T-cell (primary cell): ENCODE measurements at regions of chr7 and their contacts with region 1.

Region 1: DNA sequence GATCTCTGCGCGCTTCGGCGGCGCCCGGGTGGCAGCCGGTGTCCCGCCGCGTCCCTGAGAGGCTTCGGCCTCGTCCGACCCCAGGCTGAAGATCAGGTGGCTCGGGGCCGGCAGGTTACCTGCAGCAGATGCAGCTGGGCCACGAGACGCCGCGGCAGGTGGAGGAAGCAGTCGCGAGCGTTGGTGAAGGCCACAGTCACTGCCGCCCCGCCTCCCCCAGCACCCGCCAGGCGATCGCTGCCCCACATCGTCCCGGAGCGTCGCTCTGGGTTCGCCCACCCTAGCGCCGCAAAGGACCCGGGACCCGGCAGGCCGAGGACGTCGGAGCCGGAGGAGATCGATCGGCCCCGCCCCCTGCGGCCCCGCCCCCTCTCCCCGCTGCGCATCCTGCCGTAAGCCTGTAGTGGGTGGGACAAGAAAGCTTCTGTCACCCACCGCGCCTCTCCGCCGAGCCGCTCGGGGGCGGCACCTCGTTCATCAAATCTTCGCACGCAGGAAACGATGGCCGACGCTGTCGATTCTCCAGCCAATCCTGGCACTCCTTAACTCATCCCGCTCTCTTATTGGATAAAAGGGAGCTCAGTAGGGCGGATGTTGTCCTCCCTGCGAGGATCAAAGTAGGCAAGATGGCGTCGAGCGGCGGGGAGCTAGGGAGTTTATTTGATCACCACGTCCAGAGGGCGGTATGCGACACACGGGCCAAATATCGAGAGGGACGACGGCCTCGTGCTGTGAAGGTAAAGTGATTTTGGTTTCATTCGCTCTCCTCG is at the starts of genes PEX1 and RBM48:
- DNase-seq: peak; percentile 85 to 99 (median 96)
- ATAC-seq: peak; percentile 90 to 95 (median 94)
- H3K4me3 ChIP-seq: peak within 1 kb of the TSS; percentile 87 to 96
- H3K4me3 Mint-ChIP-seq: peak within 1 kb of the TSS; percentile 83 to 85 (median 84)
- H3K27ac ChIP-seq: peak within 1 kb of the TSS; percentile 93
- H3K27ac Mint-ChIP-seq: peak within 1 kb of the TSS; percentile 89 to 96
- H3K4me1 ChIP-seq: peaks cover 9 to 19% of the 10 kb centered on the region in 2 experiments
- H3K4me1 Mint-ChIP-seq: peaks cover 43 to 61% (median 49%) of the 10 kb centered on the region in 3 donors
- H3K27me3 ChIP-seq: no peaks in the 10 kb centered on the region
- H3K27me3 Mint-ChIP-seq: no peaks in the 10 kb centered on the region
- total RNA-seq, gene PEX1: 24.0 to 33.8 (median 29.2) TPM
- total RNA-seq, gene RBM48: 23.9 to 37.1 (median 29.6) TPM

Region 2: GRCh38 chr7:92295391-92295790 is 233.0 kb before region 1 on chr7:
- CTCF ChIA-PET with region 1: no interaction called
- POLR2A ChIA-PET with region 1: interaction called in 1 of 2 experiments, 10 read pairs
- DNase-seq: no peak
- ATAC-seq: no peak
- H3K4me3 ChIP-seq: no peak overlapping the region
- H3K4me3 Mint-ChIP-seq: no peak overlapping the region
- H3K27ac ChIP-seq: no peak overlapping the region
- H3K27ac Mint-ChIP-seq: no peak overlapping the region
- H3K4me1 ChIP-seq: no peaks in the 10 kb centered on the region
- H3K4me1 Mint-ChIP-seq: peaks cover 21 to 30% (median 21%) of the 10 kb centered on the region in 3 donors
- H3K27me3 ChIP-seq: no peaks in the 10 kb centered on the region
- H3K27me3 Mint-ChIP-seq: no peaks in the 10 kb centered on the region

Region 3: DNA sequence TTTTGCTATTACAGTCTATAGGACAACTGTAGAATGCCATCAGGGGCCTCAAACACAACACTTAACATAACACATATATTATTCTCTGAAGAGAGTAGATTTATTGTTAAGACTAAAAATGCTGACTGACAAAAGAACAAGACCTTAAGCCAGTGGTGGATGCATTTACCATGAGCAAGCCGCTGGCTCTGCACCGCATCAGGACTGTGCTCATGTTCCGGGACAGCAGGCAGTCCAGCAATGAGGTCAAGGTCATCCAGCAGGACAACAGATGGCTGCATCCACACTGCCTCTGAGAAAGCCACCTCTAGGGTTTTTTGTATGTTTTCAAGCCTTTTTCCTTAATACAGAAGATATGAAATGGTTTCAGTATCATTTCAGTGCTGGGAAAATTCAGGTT is 23.8 kb before region 1 on chr7:
- CTCF ChIA-PET with region 1: no interaction called
- POLR2A ChIA-PET with region 1: no interaction called
- DNase-seq: no peak
- ATAC-seq: no peak
- H3K4me3 ChIP-seq: no peak overlapping the region
- H3K4me3 Mint-ChIP-seq: no peak overlapping the region
- H3K27ac ChIP-seq: no peak overlapping the region
- H3K27ac Mint-ChIP-seq: no peak overlapping the region
- H3K4me1 ChIP-seq: no peaks in the 10 kb centered on the region
- H3K4me1 Mint-ChIP-seq: peaks cover 0 to 6% (median 4%) of the 10 kb centered on the region in 3 donors
- H3K27me3 ChIP-seq: no peaks in the 10 kb centered on the region
- H3K27me3 Mint-ChIP-seq: no peaks in the 10 kb centered on the region

Region 4: GRCh38 chr7:92584996-92585395 is 56.6 kb after region 1 on chr7:
- CTCF ChIA-PET with region 1: interaction called in 1 of 2 experiments, 28 read pairs
- POLR2A ChIA-PET with region 1: interaction called, 9 to 11 read pairs
- DNase-seq: peak in 3 of 35 experiments; percentile 6 to 33 (median 11)
- ATAC-seq: peak in 1 of 4 experiments; percentile 21
- H3K4me3 ChIP-seq: no peak overlapping the region
- H3K4me3 Mint-ChIP-seq: peak overlapping the region in 1 of 3 donors; percentile 22
- H3K27ac ChIP-seq: peak overlapping the region; percentile 1
- H3K27ac Mint-ChIP-seq: peak overlapping the region; percentile 25 to 79
- H3K4me1 ChIP-seq: peaks cover 19 to 20% of the 10 kb centered on the region in 2 experiments
- H3K4me1 Mint-ChIP-seq: peaks cover 65 to 74% (median 66%) of the 10 kb centered on the region in 3 donors
- H3K27me3 ChIP-seq: no peaks in the 10 kb centered on the region
- H3K27me3 Mint-ChIP-seq: no peaks in the 10 kb centered on the region

Region 5: DNA sequence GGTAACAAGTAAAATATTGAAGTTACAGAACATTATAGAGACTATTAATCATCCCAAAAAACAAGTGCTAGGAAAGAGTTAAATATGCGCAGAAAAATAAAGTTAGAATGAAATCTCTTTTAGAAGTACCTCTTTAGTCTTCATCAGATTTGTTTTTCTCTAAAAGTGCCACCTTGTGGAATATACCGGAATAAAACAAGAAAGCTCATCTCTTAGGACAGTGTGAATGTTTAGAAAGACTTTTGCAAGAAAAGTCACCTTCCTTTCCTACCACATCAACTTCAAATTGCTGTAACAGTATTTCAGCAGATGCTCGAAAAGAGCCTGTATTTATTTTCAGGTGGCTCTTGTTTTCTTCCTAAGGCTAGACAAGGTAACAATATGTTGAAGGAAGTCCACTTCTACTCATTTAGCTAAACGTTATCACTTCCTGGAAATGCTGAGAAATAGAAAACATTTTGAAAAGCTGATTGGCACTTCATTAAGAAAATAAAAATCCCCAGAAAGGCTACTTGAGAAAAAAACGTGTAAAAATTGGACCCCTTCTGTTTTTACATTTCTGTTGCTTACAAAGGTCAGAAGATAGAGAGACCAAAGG is 81.6 kb after region 1 on chr7:
- CTCF ChIA-PET with region 1: interaction called in 1 of 2 experiments, 11 read pairs
- POLR2A ChIA-PET with region 1: interaction called in 1 of 2 experiments, 7 read pairs
- DNase-seq: peak in 1 of 35 experiments; percentile 43
- ATAC-seq: peak in 3 of 4 experiments; percentile 60 to 71 (median 65)
- H3K4me3 ChIP-seq: no peak overlapping the region
- H3K4me3 Mint-ChIP-seq: no peak overlapping the region
- H3K27ac ChIP-seq: no peak overlapping the region
- H3K27ac Mint-ChIP-seq: peak overlapping the region; percentile 37 to 57
- H3K4me1 ChIP-seq: peaks cover 0 to 2% of the 10 kb centered on the region in 2 experiments
- H3K4me1 Mint-ChIP-seq: peaks cover 6 to 9% (median 9%) of the 10 kb centered on the region in 3 donors
- H3K27me3 ChIP-seq: no peaks in the 10 kb centered on the region
- H3K27me3 Mint-ChIP-seq: no peaks in the 10 kb centered on the region

Region 6: DNA sequence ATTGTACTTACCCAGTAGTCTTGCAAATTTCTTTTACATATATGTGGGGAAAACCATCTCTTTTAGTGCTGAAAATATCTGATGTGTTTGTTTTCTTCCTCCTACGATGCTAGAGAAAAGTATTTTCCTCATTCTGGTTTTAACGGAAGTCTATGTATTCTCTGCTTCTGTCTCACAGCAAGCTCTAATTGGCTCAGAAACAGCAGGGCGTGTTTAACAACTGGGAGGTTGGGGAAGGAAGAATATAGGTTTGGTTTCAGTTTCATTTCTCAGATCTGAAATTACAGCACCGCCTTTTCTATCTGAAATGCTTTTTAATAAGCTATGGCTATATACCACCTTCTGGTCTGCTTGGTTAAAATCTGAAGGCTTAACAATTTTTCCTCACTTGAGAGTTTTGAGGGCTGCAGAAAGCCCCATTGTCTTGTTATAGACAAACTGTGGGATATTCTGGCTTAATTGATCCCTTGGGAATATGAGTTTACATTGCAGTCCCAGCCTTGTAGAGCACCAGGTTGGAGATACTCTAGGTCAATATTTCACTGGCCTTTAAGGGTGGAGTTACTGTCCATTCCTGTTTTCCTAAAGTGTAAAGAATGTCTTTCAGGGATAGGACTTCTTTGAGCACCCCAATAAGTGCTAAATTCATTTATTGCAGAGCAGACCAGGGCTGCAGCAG is 589.6 kb after region 1 on chr7 and contains the start of gene SAMD9:
- CTCF ChIA-PET with region 1: interaction called, 3 to 8 read pairs
- POLR2A ChIA-PET with region 1: interaction called in 1 of 2 experiments, 12 read pairs
- DNase-seq: peak in 33 of 35 experiments; percentile 22 to 86 (median 64)
- ATAC-seq: peak; percentile 99 to 100 (median 99)
- H3K4me3 ChIP-seq: peak within 1 kb of the TSS; percentile 49 to 55
- H3K4me3 Mint-ChIP-seq: peak within 1 kb of the TSS; percentile 74 to 92 (median 86)
- H3K27ac ChIP-seq: peak within 1 kb of the TSS; percentile 70
- H3K27ac Mint-ChIP-seq: peak within 1 kb of the TSS; percentile 88 to 97
- H3K4me1 ChIP-seq: peaks cover 13 to 22% of the 10 kb centered on the region in 2 experiments
- H3K4me1 Mint-ChIP-seq: peaks cover 46 to 54% (median 49%) of the 10 kb centered on the region in 3 donors
- H3K27me3 ChIP-seq: no peaks in the 10 kb centered on the region
- H3K27me3 Mint-ChIP-seq: no peaks in the 10 kb centered on the region
- total RNA-seq, gene SAMD9: 28.2 to 42.2 (median 38.1) TPM